Activated CD8-positive, alpha-beta T cell treated with anti-CD3 and anti-CD28 coated beads for 36 hours (primary cell): ENCODE measurements at regions of chr14 and their contacts with region 1.

Region 1: DNA sequence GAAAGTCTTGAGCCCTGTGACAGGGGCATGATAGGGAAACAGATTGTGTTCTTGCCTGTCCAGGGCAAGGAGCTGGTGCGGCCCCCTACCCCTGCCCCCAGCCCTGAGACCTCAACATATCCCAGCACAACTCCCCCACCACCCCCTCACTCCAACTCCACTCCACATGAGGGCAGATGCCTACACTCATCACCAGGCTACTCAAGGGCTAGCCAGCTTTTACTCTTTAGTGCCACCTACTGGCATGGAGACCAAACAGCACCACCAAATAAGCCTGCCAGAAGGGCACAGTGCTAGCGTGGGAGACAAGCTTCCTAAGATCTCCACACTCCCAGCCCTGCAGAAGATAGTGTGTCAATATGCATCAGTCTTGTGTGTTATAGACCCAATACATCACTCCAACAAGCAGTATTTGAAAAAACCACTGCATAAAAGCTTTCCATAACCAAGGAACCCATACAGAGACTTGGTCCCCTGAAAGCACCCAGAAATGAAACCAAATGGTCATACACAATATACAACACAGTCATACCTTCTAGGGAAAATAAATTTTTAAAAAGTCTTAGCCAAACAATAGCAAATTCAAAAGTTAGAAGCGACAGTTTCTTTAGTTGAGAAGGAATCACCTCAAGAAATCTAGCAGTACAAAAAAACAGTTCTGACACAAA is 154.4 kb downstream of the KCNK10 start:
- DNase-seq: peak; percentile 70
- ATAC-seq: peak; percentile 94
- H3K4me3 Mint-ChIP-seq: no peak overlapping the region
- H3K27ac Mint-ChIP-seq: no peak overlapping the region
- H3K4me1 Mint-ChIP-seq: peaks cover 13% of the 10 kb centered on the region
- H3K27me3 Mint-ChIP-seq: peaks cover 13% of the 10 kb centered on the region
- CTCF ChIP-seq: peak; percentile 74

Region 2: DNA sequence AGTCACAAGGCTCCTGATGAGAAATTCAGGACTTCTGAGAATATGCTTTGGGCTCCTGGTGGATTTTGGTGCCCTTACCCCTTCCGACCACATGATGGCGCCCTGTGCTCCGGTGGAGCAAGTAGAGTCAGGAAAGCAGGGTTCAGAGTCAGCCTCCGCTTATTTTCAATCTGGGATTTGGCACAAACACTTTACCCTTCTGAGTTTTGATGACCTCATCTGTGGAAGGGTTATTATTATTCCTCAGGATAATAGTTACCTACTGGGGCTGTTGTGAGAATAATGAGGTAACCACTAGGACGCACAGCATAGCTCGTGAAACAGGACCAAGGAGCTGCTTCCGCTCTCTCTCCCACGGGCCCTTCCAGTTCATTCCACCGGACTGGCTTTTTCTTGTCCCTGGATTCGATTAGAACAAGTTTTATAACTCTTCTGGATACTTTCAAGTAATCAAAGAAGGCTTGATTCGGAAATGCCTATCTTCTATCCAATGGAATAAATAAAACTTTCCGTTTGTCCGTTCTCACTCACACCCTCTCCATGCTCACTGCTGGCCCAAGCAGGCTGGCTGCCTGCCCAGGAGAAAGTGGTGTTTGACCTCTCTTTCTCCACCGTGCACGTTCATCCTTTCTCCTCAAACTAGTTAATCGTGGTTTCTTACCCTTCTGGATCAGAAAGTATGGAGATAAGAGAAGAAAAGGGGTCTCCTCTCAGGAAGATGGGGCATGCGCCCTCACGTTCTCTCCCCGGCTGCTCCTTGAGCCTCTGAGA is 280.2 kb before region 1 on chr14:
- CTCF ChIA-PET with region 1: no interaction called
- POLR2A ChIA-PET with region 1: no interaction called
- intact Hi-C with region 1: no loop called
- DNase-seq: peak; percentile 54
- ATAC-seq: no peak
- H3K4me3 Mint-ChIP-seq: no peak overlapping the region
- H3K27ac Mint-ChIP-seq: no peak overlapping the region
- H3K4me1 Mint-ChIP-seq: no peaks in the 10 kb centered on the region
- H3K27me3 Mint-ChIP-seq: peaks cover 11% of the 10 kb centered on the region
- CTCF ChIP-seq: peak; percentile 62

Region 3: GRCh38 chr14:87944987-87945604 is 223.5 kb before region 1 on chr14:
- CTCF ChIA-PET with region 1: interaction called, 86 read pairs
- POLR2A ChIA-PET with region 1: no interaction called
- intact Hi-C with region 1: loop called (anchors 2 kb)
- DNase-seq: no peak
- ATAC-seq: peak; percentile 62
- H3K4me3 Mint-ChIP-seq: no peak overlapping the region
- H3K27ac Mint-ChIP-seq: no peak overlapping the region
- H3K4me1 Mint-ChIP-seq: peaks cover 2% of the 10 kb centered on the region
- H3K27me3 Mint-ChIP-seq: no peaks in the 10 kb centered on the region
- CTCF ChIP-seq: peak; percentile 83

Region 4: GRCh38 chr14:88005978-88006851 is 162.4 kb before region 1 on chr14:
- CTCF ChIA-PET with region 1: interaction called, 5 read pairs
- POLR2A ChIA-PET with region 1: no interaction called
- intact Hi-C with region 1: loop called (anchors 5 kb)
- DNase-seq: peak; percentile 85
- ATAC-seq: peak; percentile 82
- H3K4me3 Mint-ChIP-seq: peak overlapping the region; percentile 93
- H3K27ac Mint-ChIP-seq: peak overlapping the region; percentile 96
- H3K4me1 Mint-ChIP-seq: peaks cover 62% of the 10 kb centered on the region
- H3K27me3 Mint-ChIP-seq: no peaks in the 10 kb centered on the region
- CTCF ChIP-seq: no peak

Region 5: GRCh38 chr14:88154926-88155325 is 13.7 kb before region 1 on chr14:
- CTCF ChIA-PET with region 1: interaction called, 12 read pairs
- POLR2A ChIA-PET with region 1: no interaction called
- intact Hi-C with region 1: no loop called
- DNase-seq: no peak
- ATAC-seq: no peak
- H3K4me3 Mint-ChIP-seq: no peak overlapping the region
- H3K27ac Mint-ChIP-seq: no peak overlapping the region
- H3K4me1 Mint-ChIP-seq: no peaks in the 10 kb centered on the region
- H3K27me3 Mint-ChIP-seq: no peaks in the 10 kb centered on the region
- CTCF ChIP-seq: no peak

Region 6: GRCh38 chr14:88189417-88190191 is 21.0 kb after region 1 on chr14:
- CTCF ChIA-PET with region 1: interaction called, 13 read pairs
- POLR2A ChIA-PET with region 1: interaction called, 3 read pairs
- intact Hi-C with region 1: no loop called
- DNase-seq: peak; percentile 82
- ATAC-seq: peak; percentile 74
- H3K4me3 Mint-ChIP-seq: no peak overlapping the region
- H3K27ac Mint-ChIP-seq: no peak overlapping the region
- H3K4me1 Mint-ChIP-seq: peaks cover 5% of the 10 kb centered on the region
- H3K27me3 Mint-ChIP-seq: peaks cover 7% of the 10 kb centered on the region
- CTCF ChIP-seq: peak; percentile 72

Region 7: DNA sequence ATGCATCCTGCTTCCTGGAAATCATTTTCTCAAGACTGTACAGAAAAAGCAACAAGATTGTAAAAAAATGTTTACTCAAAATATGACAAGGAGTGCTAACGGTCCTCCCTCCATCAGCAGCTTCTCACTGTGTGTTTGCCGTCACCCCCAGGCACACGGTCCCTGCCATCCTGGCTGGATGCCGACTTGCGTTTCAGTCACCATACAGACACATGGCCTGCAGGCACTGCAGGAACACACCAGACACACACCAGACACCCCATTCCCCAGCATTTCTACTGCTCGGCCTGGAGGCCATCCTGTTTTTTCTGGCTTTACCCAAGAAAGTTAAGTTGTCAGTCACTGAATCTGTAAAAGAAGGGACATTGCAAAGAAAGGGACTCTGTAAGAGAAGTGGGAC is 143.6 kb after region 1 on chr14:
- CTCF ChIA-PET with region 1: no interaction called
- POLR2A ChIA-PET with region 1: no interaction called
- intact Hi-C with region 1: no loop called
- DNase-seq: no peak
- ATAC-seq: no peak
- H3K4me3 Mint-ChIP-seq: no peak overlapping the region
- H3K27ac Mint-ChIP-seq: no peak overlapping the region
- H3K4me1 Mint-ChIP-seq: no peaks in the 10 kb centered on the region
- H3K27me3 Mint-ChIP-seq: peaks cover 14% of the 10 kb centered on the region
- CTCF ChIP-seq: no peak

Region 8: DNA sequence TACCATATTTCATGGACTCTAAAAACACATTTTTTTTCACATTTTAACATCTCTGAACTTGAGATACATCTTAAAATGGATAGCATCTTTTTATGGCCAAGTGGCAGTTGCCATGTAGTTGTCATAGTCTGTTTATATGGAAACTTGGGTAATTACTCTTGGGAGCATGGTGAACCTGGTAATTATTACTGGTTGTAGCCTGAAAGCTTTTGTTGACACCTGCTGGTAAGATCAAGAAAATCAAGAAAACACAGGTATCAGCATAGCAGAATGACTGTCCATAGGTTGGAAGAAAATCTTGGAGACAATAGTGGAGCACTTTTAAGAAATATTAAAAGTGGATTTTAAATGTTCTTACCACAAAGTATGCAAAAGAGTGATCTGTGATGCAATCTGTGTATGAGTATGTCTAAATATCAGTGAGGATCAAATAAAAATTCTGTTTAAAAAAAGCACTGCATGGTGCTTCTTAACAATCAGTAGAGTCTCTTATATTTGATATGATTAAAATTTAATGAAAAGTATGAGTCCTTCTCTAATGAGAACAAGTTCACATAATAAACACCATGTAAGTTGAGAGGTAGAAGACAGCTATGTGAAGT is 700.0 kb after region 1 on chr14:
- CTCF ChIA-PET with region 1: no interaction called
- POLR2A ChIA-PET with region 1: no interaction called
- intact Hi-C with region 1: no loop called
- DNase-seq: no peak
- ATAC-seq: no peak
- H3K4me3 Mint-ChIP-seq: no peak overlapping the region
- H3K27ac Mint-ChIP-seq: no peak overlapping the region
- H3K4me1 Mint-ChIP-seq: no peaks in the 10 kb centered on the region
- H3K27me3 Mint-ChIP-seq: no peaks in the 10 kb centered on the region
- CTCF ChIP-seq: peak; percentile 29